Activated CD8-positive, alpha-beta T cell treated with anti-CD3 and anti-CD28 coated beads, Interleukin-2, amount 10 ng/mL, durations not matched to agents 7 days and 5 days (primary cell): ENCODE measurements at regions of chr12 and their contacts with region 1.

Region 1: GRCh38 chr12:4107436-4107878 is 166.1 kb upstream of the CCND2 start:
- DNase-seq: peak; percentile 89
- ATAC-seq: peak; percentile 93
- H3K4me3 Mint-ChIP-seq: peak overlapping the region; percentile 60
- H3K27ac Mint-ChIP-seq: peak overlapping the region; percentile 92
- H3K4me1 Mint-ChIP-seq: peaks cover 64% of the 10 kb centered on the region
- H3K27me3 Mint-ChIP-seq: peaks cover 2% of the 10 kb centered on the region

Region 2: DNA sequence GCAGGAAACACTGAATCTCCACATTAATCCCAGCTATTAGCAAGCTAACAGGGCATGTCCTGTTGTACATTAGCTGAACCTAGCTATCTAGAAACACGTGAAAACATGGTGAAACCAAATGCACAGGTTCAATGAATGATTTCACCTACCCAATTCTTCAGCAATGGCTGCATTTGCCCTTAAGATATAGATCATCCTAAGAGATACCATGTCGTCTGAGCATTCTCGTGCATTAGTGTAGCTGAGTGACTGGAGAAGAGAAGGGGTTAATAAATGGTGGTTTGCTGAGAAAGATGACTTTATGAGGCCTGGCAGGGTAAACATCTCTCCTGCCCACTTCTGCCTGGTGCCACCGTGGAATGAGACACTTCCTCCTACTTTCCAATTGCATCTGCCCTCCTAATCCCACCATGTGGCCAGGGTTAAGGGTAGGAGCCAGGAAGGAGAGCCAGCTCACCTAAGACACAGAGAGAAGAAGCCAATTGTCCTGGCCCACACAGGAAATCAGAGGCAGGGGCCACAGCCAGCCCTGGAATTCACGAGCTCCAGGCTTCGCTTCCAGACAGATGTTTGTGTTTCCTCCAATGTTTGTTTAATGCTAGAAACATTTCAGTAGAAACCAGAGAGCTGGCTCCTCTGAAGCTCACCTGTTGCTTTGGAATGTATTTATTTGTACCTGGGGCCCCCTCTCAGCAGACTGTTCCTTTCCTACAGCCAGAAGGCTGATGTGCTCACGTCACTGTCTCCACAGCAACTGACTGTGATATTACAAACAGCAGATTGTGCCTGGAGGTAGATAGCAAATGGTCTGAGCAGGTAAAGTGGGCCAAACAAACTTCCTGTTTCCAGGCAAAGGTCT is 108.3 kb before region 1 on chr12:
- CTCF ChIA-PET with region 1: interaction called, 10 read pairs
- POLR2A ChIA-PET with region 1: no interaction called
- DNase-seq: no peak
- ATAC-seq: no peak
- H3K4me3 Mint-ChIP-seq: no peak overlapping the region
- H3K27ac Mint-ChIP-seq: no peak overlapping the region
- H3K4me1 Mint-ChIP-seq: peaks cover 39% of the 10 kb centered on the region
- H3K27me3 Mint-ChIP-seq: no peaks in the 10 kb centered on the region

Region 3: GRCh38 chr12:4009979-4010704 is 97.3 kb before region 1 on chr12:
- CTCF ChIA-PET with region 1: no interaction called
- POLR2A ChIA-PET with region 1: no interaction called
- DNase-seq: no peak
- ATAC-seq: no peak
- H3K4me3 Mint-ChIP-seq: no peak overlapping the region
- H3K27ac Mint-ChIP-seq: no peak overlapping the region
- H3K4me1 Mint-ChIP-seq: peaks cover 4% of the 10 kb centered on the region
- H3K27me3 Mint-ChIP-seq: peaks cover 7% of the 10 kb centered on the region

Region 4: DNA sequence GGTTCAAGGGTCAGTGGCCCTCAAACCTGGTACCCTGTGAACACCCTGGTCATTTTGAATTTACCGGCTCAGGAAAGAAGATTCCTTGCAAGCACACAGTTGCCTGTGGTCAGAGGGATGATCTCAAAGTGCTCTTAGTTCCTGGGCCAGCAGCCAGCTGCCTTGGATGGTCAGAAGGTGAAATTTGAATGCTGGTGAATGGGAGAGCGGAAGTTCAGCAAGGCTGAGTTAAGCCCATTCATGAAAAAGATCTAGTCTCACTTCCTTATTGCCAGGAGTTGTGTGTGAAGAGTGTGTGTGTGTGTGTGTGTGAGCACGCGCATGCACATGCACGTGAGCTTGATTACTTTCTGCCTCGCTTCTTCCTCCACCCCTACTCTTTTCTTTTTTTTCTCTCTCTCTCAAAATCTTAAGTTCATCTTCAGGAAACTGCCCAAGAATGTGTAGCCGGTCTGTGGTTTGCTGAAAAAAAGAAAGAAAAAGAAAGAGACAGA is 10.6 kb after region 1 on chr12:
- CTCF ChIA-PET with region 1: interaction called, 42 read pairs
- POLR2A ChIA-PET with region 1: interaction called, 16 read pairs
- DNase-seq: peak; percentile 32
- ATAC-seq: peak; percentile 30
- H3K4me3 Mint-ChIP-seq: peak overlapping the region; percentile 55
- H3K27ac Mint-ChIP-seq: peak overlapping the region; percentile 88
- H3K4me1 Mint-ChIP-seq: peaks cover 73% of the 10 kb centered on the region
- H3K27me3 Mint-ChIP-seq: no peaks in the 10 kb centered on the region

Region 5: GRCh38 chr12:4148418-4149056 is 41.1 kb after region 1 on chr12:
- CTCF ChIA-PET with region 1: interaction called, 94 read pairs
- POLR2A ChIA-PET with region 1: interaction called, 20 read pairs
- DNase-seq: peak; percentile 39
- ATAC-seq: no peak
- H3K4me3 Mint-ChIP-seq: no peak overlapping the region
- H3K27ac Mint-ChIP-seq: peak overlapping the region; percentile 74
- H3K4me1 Mint-ChIP-seq: peaks cover 96% of the 10 kb centered on the region
- H3K27me3 Mint-ChIP-seq: no peaks in the 10 kb centered on the region

Region 6: GRCh38 chr12:4215229-4216186 is 108.1 kb after region 1 on chr12:
- CTCF ChIA-PET with region 1: interaction called, 16 read pairs
- POLR2A ChIA-PET with region 1: no interaction called
- DNase-seq: peak; percentile 44
- ATAC-seq: peak; percentile 85
- H3K4me3 Mint-ChIP-seq: peak overlapping the region; percentile 51
- H3K27ac Mint-ChIP-seq: peak overlapping the region; percentile 90
- H3K4me1 Mint-ChIP-seq: peaks cover 42% of the 10 kb centered on the region
- H3K27me3 Mint-ChIP-seq: no peaks in the 10 kb centered on the region

Region 7: GRCh38 chr12:4441355-4442335 is 334.2 kb after region 1 on chr12:
- CTCF ChIA-PET with region 1: no interaction called
- POLR2A ChIA-PET with region 1: no interaction called
- DNase-seq: no peak
- ATAC-seq: no peak
- H3K4me3 Mint-ChIP-seq: no peak overlapping the region
- H3K27ac Mint-ChIP-seq: no peak overlapping the region
- H3K4me1 Mint-ChIP-seq: peaks cover 20% of the 10 kb centered on the region
- H3K27me3 Mint-ChIP-seq: peaks cover 7% of the 10 kb centered on the region